Vagina (tissue), 2 donors: ENCODE measurements at regions of chr19 and their contacts with region 1.

Region 1: GRCh38 chr19:34818270-34818669 is 45.3 kb upstream of the ZNF599 start:
- DNase-seq: no peak
- H3K4me3 ChIP-seq: no peak overlapping the region
- H3K27ac ChIP-seq: no peak overlapping the region
- H3K4me1 ChIP-seq: no peaks in the 10 kb centered on the region
- H3K27me3 ChIP-seq: no peaks in the 10 kb centered on the region
- CTCF ChIP-seq: no peak
- POLR2A ChIP-seq: no peak

Region 2: DNA sequence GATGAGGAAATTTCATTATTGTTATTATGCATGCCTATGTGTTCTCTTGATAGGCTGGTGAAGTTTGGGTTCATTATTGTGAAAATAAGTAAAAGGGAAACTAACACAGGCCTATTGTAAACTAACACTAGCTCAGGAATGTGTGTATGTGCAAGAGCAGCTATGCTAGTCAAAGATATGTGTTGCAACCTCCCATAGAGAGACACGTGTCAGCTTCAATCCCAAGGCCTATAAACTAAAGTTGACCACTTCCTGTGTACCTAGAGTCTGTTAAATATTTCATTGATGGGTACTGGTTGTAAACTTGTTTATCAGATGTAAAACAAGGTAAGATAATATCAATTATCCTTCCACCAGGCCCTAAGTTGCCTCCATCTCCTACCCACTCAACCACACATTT is 63.7 kb after region 1 on chr19:
- intact Hi-C with region 1: no loop called
- DNase-seq: no peak
- H3K4me3 ChIP-seq: no peak overlapping the region
- H3K27ac ChIP-seq: no peak overlapping the region
- H3K4me1 ChIP-seq: no peaks in the 10 kb centered on the region
- H3K27me3 ChIP-seq: no peaks in the 10 kb centered on the region
- CTCF ChIP-seq: no peak
- POLR2A ChIP-seq: no peak

Region 3: DNA sequence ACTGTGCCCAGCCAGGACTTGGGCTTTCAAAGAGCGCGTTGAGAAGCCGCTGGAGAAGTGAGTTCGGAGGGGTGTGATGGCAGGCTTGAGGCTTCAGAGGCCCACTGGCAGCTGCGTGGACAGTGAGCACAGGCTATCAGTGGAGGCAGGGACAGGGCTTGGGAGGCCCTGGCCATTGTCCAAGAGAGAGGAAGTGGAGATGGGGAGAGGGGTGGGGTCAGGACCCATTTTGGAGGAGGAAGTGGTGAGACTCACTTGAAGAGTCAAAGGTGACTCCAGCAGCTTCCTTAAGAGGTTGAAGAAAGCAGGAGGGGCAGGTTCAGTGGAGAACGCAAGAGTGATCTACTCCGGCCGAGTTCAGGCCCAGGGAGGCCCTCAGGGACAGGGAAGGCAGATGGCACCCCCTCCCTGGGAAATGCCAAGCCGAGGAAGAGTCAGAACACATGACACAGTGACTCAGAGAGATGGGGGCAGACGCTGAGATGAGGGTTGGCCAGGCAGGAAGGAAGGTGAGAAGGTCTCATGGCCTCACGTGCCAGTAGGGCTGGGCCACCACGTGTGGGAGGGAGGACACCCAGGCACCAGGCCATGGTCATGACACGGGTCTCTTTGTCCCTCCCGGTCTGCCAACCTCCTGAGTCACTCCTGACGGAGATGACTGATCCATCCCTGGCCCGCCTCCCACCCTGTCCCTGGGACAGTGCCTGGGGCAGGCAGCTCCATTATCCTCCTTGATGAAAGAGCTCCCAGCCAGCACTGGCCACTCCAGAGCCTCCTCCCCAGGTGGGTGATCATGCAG is 500.6 kb after region 1 on chr19:
- intact Hi-C with region 1: loop called (anchors 10 kb)
- DNase-seq: no peak
- H3K4me3 ChIP-seq: no peak overlapping the region
- H3K27ac ChIP-seq: peak overlapping the region; percentile 69
- H3K4me1 ChIP-seq: peaks cover 19% of the 10 kb centered on the region
- H3K27me3 ChIP-seq: no peaks in the 10 kb centered on the region
- CTCF ChIP-seq: no peak
- POLR2A ChIP-seq: no peak